ENCODE measurements at regions of chr12 and their contacts with region 1.

Region 1: GRCh38 chr12:104387190-104387589 is 69.6 kb upstream of the CHST11 start:
- DNase-seq: no peak
- H3K4me3 ChIP-seq: no peak overlapping the region
- H3K27ac ChIP-seq: no peak overlapping the region
- H3K4me1 ChIP-seq: no peaks in the 10 kb centered on the region
- H3K27me3 ChIP-seq: no peaks in the 10 kb centered on the region
- CTCF ChIP-seq: no peak
- POLR2A ChIP-seq: no peak

Region 2: GRCh38 chr12:104358347-104359003 is 28.7 kb before region 1 on chr12:
- intact Hi-C with region 1: no loop called
- DNase-seq: peak in 1 of 2 donors; percentile 41
- H3K4me3 ChIP-seq: no peak overlapping the region
- H3K27ac ChIP-seq: no peak overlapping the region
- H3K4me1 ChIP-seq: no peaks in the 10 kb centered on the region
- H3K27me3 ChIP-seq: no peaks in the 10 kb centered on the region
- CTCF ChIP-seq: peak; percentile 77 to 86 (median 80)
- POLR2A ChIP-seq: no peak

Region 3: GRCh38 chr12:104699489-104700190 is 312.4 kb after region 1 on chr12:
- intact Hi-C with region 1: no loop called
- DNase-seq: no peak
- H3K4me3 ChIP-seq: no peak overlapping the region
- H3K27ac ChIP-seq: peak overlapping the region in 1 of 2 donors; percentile 43
- H3K4me1 ChIP-seq: no peaks in the 10 kb centered on the region
- H3K27me3 ChIP-seq: no peaks in the 10 kb centered on the region
- CTCF ChIP-seq: no peak
- POLR2A ChIP-seq: no peak

Region 4: DNA sequence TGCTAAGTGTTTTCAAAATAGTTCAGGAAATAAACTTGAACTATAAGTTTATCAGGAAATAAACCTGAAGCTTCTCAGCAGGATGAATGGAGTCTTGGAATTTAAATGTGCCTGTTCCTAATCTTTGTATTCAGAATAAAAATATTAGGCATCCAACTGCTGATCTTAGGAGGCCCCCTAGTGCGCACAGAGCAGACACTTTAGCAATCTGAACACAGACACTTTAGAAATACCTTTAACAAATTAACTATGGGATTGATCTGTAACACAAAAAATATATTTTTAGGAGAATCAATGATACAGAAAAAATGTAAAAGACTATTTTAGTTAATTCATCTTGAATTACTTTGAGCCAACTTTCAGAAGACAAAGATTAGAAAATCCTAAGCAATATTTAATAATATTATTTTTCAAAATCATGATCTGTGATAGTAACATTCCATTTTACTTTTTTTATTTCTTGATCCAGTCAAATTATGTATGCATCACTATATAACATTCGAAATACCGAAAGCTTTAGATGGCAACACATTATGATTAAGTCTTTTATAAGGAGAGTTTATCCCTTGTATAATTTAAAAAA is 490.0 kb after region 1 on chr12:
- intact Hi-C with region 1: loop called (anchors 2 kb)
- DNase-seq: no peak
- H3K4me3 ChIP-seq: no peak overlapping the region
- H3K27ac ChIP-seq: no peak overlapping the region
- H3K4me1 ChIP-seq: no peaks in the 10 kb centered on the region
- H3K27me3 ChIP-seq: no peaks in the 10 kb centered on the region
- CTCF ChIP-seq: peak; percentile 41 to 65 (median 53)
- POLR2A ChIP-seq: no peak